A549 (cell line): ENCODE measurements at regions of chr9 and their contacts with region 1.

Region 1: GRCh38 chr9:133532937-133533668 is 1.4 kb upstream of the ADAMTSL2 start:
- DNase-seq: peak; percentile 41 to 78
- ATAC-seq: peak; percentile 43 to 83; a peak in 4 of 6 replicates
- H3K4me3 ChIP-seq: no peak overlapping the region
- H3K27ac ChIP-seq: no peak overlapping the region
- H3K4me1 ChIP-seq: no peaks in the 10 kb centered on the region
- CTCF ChIP-seq: peak; percentile 43; the same call in 2 of the 3 replicates
- EP300 ChIP-seq: no peak
- POLR2A ChIP-seq: no peak
- RAD21 ChIP-seq: peak; percentile 60 to 84

Region 2: GRCh38 chr9:133522073-133523035 is 10.7 kb before region 1 on chr9:
- CTCF ChIA-PET with region 1: interaction called, 28 read pairs
- POLR2A ChIA-PET with region 1: no interaction called
- DNase-seq: no peak
- ATAC-seq: no peak
- H3K4me3 ChIP-seq: no peak overlapping the region
- H3K27ac ChIP-seq: no peak overlapping the region
- H3K4me1 ChIP-seq: peaks cover 5% of the 10 kb centered on the region; the same call in 1 of the 3 replicates
- CTCF ChIP-seq: no peak
- EP300 ChIP-seq: no peak
- POLR2A ChIP-seq: no peak
- RAD21 ChIP-seq: no peak

Region 3: GRCh38 chr9:133543759-133544467 is 10.8 kb after region 1 on chr9:
- CTCF ChIA-PET with region 1: interaction called, 10 read pairs
- POLR2A ChIA-PET with region 1: no interaction called
- DNase-seq: no peak
- ATAC-seq: no peak
- H3K4me3 ChIP-seq: no peak overlapping the region
- H3K27ac ChIP-seq: no peak overlapping the region
- H3K4me1 ChIP-seq: no peaks in the 10 kb centered on the region
- CTCF ChIP-seq: no peak
- EP300 ChIP-seq: no peak
- POLR2A ChIP-seq: no peak
- RAD21 ChIP-seq: no peak

Region 4: DNA sequence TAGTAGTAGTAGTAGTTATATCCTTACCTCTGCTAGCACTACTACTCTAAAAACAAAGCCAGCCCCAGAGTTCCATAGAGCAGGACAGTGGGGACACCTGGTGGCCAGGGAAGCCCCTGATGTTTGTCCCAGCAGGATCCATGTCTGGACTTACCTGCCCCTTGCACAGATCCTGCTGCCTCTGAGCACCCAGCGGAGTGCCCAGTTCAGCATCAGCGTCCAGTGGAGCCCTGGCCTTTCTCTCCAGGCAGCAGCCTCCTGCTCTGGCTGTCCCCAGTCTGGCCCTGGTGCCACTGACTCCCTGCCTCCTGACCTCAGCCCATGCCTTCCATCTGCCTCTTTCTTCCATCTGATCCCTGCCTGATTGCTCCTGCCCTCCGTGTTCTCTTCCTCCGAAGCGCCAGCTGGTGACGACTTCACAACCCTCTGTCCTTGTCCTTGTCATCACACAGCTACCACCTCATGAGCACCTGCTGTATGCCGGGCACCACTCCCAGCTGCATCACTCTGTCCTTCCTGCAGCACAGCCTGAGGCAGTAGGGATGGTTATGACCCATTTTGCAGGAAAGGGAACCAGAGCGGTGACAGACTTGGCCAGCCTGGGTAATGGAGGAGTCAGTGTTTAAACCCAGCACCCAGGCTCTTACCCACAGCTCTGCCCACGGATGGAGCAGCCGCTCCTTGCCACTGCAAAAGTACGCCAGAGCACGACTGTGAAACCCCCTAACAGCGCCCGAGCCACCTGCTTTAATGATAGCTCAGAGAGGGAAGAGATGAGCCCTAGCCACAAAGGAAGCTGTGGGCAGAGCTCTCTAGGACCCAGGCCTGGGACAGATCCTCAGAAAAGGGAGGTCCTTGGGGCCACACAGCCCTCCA is 193.5 kb after region 1 on chr9:
- CTCF ChIA-PET with region 1: interaction called, 72 read pairs
- POLR2A ChIA-PET with region 1: no interaction called
- DNase-seq: peak; percentile 69 to 78
- ATAC-seq: peak; percentile 80 to 86
- H3K4me3 ChIP-seq: no peak overlapping the region
- H3K27ac ChIP-seq: no peak overlapping the region
- H3K4me1 ChIP-seq: no peaks in the 10 kb centered on the region
- CTCF ChIP-seq: peak; percentile 48; the same call in 2 of the 3 replicates
- EP300 ChIP-seq: no peak
- POLR2A ChIP-seq: no peak
- RAD21 ChIP-seq: peak; percentile 69 to 81